Body of pancreas (tissue), 4 donors: ENCODE measurements at regions of chr9 and their contacts with region 1.

Region 1: DNA sequence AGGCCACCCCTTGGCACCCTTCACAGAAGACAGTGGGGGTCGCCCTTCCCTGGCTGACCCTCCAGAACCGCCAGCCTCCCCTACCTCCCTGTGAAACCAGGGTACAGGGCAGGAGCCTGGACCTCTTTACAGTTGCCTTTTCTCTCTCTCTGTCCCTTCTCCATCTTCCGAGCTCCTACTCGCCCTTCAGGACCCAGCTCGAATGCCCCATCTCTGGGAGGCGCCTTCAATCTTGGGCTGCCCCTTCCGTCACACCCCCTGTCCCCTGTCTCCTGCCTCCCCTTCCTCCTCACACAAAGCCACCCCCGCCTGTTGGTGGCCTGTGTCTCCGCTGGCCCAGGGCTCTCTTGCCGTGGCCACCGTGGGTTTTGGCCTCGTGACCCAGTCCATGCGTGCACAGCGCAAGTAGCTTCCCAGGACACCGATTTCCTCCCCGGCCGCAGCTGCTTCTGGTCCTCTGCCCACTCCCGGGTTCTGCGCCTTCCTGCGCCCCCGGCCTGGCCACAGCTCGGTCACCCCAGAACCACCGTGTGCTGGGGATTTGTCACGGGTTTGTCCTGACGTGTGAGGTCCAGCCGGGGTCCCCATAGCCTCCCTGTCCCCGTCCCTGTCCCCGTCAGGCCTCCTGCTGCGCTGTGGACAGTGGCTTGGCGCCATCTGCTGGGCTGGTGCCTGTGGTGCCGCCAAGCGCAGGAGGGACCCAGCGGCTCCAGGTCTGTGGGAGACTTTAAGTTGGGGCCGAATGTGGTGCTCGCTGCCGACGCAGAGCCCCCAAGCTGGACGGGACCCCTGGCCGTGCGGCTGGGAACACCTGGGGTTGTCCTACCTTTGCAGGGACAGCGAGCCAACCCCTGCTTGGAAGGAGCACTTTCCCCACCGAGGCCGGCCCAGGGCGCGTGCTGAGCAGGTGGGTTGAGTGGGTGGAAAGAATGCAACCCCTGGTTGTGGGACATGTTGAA is 4.0 kb upstream of the TMEM250 start:
- DNase-seq: peak; percentile 67 to 83 (median 78)
- ATAC-seq: peak; percentile 22
- H3K4me3 ChIP-seq: no peak overlapping the region
- H3K27ac ChIP-seq: no peak overlapping the region
- H3K4me1 ChIP-seq: peaks cover 21% of the 10 kb centered on the region
- H3K27me3 ChIP-seq: no peaks in the 10 kb centered on the region
- CTCF ChIP-seq: peak; percentile 89 to 99 (median 96)
- POLR2A ChIP-seq: no peak

Region 2: GRCh38 chr9:135701959-135702721 is 420.6 kb before region 1 on chr9 and contains the start of gene KCNT1:
- intact Hi-C with region 1: loop called (anchors 10 kb)
- DNase-seq: peak; percentile 41 to 68 (median 52)
- ATAC-seq: peak; percentile 39
- H3K4me3 ChIP-seq: no peak within 1 kb of the TSS
- H3K27ac ChIP-seq: no peak within 1 kb of the TSS
- H3K4me1 ChIP-seq: peaks cover 14% of the 10 kb centered on the region
- H3K27me3 ChIP-seq: peaks cover 0 to 8% of the 10 kb centered on the region in 2 donors
- CTCF ChIP-seq: peak; percentile 45 to 98 (median 78)
- POLR2A ChIP-seq: no peak
- total RNA-seq, gene KCNT1: under 0.01 TPM

Region 3: GRCh38 chr9:135850737-135851136 is 272.0 kb before region 1 on chr9:
- intact Hi-C with region 1: no loop called
- DNase-seq: no peak
- ATAC-seq: no peak
- H3K4me3 ChIP-seq: no peak overlapping the region
- H3K27ac ChIP-seq: no peak overlapping the region
- H3K4me1 ChIP-seq: no peaks in the 10 kb centered on the region
- H3K27me3 ChIP-seq: no peaks in the 10 kb centered on the region
- CTCF ChIP-seq: no peak
- POLR2A ChIP-seq: no peak

Region 4: GRCh38 chr9:135864447-135865049 is 258.2 kb before region 1 on chr9:
- intact Hi-C with region 1: loop called (anchors 5 kb)
- DNase-seq: peak; percentile 51 to 76 (median 63)
- ATAC-seq: peak; percentile 63
- H3K4me3 ChIP-seq: no peak overlapping the region
- H3K27ac ChIP-seq: no peak overlapping the region
- H3K4me1 ChIP-seq: no peaks in the 10 kb centered on the region
- H3K27me3 ChIP-seq: no peaks in the 10 kb centered on the region
- CTCF ChIP-seq: peak; percentile 48 to 82 (median 69)
- POLR2A ChIP-seq: no peak

Region 5: DNA sequence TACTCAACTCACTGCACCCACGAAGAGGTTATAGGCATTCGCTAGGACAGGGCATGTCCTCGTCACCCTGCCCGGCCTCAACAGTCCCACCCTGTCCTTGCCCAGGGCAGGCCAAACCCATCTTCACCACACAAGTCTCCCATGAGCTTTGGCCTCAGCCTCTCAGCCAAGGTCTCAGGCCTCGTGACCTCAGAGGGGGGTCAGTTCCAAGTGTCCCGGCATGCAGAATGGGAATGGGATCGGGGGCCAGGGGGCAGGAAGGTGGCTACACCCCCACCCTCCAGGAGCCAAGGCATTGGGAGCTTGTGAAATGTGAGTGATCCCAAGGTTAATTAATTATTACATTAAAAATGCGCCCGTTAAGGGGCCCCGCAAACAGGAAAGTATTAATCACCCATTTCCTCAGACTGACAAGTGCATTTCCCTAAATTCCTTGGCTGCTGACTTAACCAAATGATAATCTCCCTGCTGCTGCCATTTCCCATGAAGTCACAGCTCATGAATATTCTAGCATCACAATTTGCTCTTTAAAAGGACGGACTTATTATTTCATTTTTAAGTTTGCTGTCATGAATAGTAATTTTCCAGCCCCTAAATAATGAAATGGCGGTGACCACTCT is 153.5 kb before region 1 on chr9:
- intact Hi-C with region 1: loop called (anchors 2 kb)
- DNase-seq: no peak
- ATAC-seq: no peak
- H3K4me3 ChIP-seq: no peak overlapping the region
- H3K27ac ChIP-seq: peak overlapping the region in 1 of 4 donors; percentile 8
- H3K4me1 ChIP-seq: peaks cover 23% of the 10 kb centered on the region
- H3K27me3 ChIP-seq: no peaks in the 10 kb centered on the region
- CTCF ChIP-seq: no peak
- POLR2A ChIP-seq: no peak

Region 6: DNA sequence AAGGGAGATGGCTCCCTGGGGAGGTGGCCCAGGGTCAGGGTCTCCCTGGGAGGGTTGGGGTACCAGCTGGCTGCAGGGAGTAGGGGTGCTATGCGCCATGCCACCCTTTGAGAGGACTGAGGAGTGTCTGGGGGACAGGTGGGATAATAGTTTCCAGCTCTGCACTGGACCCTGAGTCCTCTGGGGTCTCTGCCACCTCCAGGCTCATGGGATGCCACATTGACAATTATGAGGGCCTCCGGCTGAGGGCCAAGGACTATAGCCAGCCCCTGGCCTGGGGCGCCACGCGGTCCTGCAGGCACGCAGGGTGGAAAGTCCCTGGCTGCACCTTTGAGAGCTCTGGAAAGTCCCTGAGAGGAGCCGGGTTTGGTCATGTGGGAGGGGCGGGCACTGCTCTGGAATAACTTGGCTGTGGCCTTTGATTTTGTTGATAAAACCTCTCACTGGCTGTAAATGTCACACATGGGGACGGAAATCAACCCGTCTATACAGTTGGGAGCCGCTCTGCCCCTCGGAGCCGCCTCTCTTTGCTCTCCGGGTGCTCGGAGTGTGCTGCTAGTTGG is 779.6 kb after region 1 on chr9:
- intact Hi-C with region 1: no loop called
- DNase-seq: peak; percentile 82 to 93 (median 88)
- ATAC-seq: peak; percentile 86
- H3K4me3 ChIP-seq: no peak overlapping the region
- H3K27ac ChIP-seq: peak overlapping the region; percentile 79 to 93 (median 87)
- H3K4me1 ChIP-seq: peaks cover 52% of the 10 kb centered on the region
- H3K27me3 ChIP-seq: no peaks in the 10 kb centered on the region
- CTCF ChIP-seq: no peak
- POLR2A ChIP-seq: peak; percentile 22 to 74 (median 71)